GM12878 (cell line): ENCODE measurements at regions of chr21 and their contacts with region 1.

Region 1: GRCh38 chr21:19405326-19405725 is 1001.7 kb upstream of the TMPRSS15 start:
- DNase-seq: no peak
- ATAC-seq: peak; percentile 55
- H3K4me3 ChIP-seq: no peak overlapping the region
- H3K27ac ChIP-seq: no peak overlapping the region
- H3K4me1 ChIP-seq: no peaks in the 10 kb centered on the region
- H3K27me3 ChIP-seq: no peaks in the 10 kb centered on the region
- CTCF ChIP-seq: no peak
- EP300 ChIP-seq: no peak
- POLR2A ChIP-seq: no peak
- RAD21 ChIP-seq: no peak

Region 2: DNA sequence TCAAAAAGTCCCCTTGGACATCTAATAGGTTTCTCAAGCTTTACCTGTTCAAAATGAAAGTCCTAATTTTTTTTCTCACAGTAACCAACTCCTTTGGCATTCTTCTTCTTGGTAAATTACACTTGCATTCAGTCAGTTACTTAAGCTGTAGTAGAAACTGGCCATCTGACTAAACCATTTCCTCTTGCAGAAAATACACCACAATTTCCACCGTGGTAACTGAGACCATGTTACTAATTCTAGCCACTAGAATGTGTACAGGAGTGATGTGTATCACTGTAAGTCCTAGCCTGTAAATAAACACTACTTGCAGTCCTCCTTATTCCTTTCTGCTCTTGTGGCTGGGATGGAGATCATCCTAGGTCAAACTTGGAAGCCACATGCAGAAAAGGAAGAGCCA is 36.4 kb before region 1 on chr21:
- CTCF ChIA-PET with region 1: no interaction called
- POLR2A ChIA-PET with region 1: no interaction called
- RAD21 ChIA-PET with region 1: interaction called, 4 read pairs
- SMC1A ChIA-PET with region 1: no interaction called
- in situ Hi-C with region 1: no loop called
- intact Hi-C with region 1: loop called (anchors 5 kb)
- DNase-seq: no peak
- ATAC-seq: peak; percentile 83
- H3K4me3 ChIP-seq: no peak overlapping the region
- H3K27ac ChIP-seq: no peak overlapping the region
- H3K4me1 ChIP-seq: no peaks in the 10 kb centered on the region
- H3K27me3 ChIP-seq: no peaks in the 10 kb centered on the region
- CTCF ChIP-seq: no peak
- EP300 ChIP-seq: no peak
- POLR2A ChIP-seq: no peak
- RAD21 ChIP-seq: no peak